ENCODE measurements at regions of chr20 and their contacts with region 1.

Region 1: GRCh38 chr20:33299111-33299603 is 16.1 kb downstream of the BPIFB1 start:
- DNase-seq: peak in 1 of 2 donors; percentile 64
- H3K4me3 ChIP-seq: no peak overlapping the region
- H3K27ac ChIP-seq: no peak overlapping the region
- H3K4me1 ChIP-seq: no peaks in the 10 kb centered on the region
- H3K27me3 ChIP-seq: no peaks in the 10 kb centered on the region
- CTCF ChIP-seq: peak; percentile 42 to 78 (median 72)

Region 2: GRCh38 chr20:32902456-32903420 is 396.4 kb before region 1 on chr20:
- intact Hi-C with region 1: loop called (anchors 10 kb)
- DNase-seq: no peak
- H3K4me3 ChIP-seq: no peak overlapping the region
- H3K27ac ChIP-seq: no peak overlapping the region
- H3K4me1 ChIP-seq: no peaks in the 10 kb centered on the region
- H3K27me3 ChIP-seq: no peaks in the 10 kb centered on the region
- CTCF ChIP-seq: peak; percentile 39 to 68 (median 50)

Region 3: DNA sequence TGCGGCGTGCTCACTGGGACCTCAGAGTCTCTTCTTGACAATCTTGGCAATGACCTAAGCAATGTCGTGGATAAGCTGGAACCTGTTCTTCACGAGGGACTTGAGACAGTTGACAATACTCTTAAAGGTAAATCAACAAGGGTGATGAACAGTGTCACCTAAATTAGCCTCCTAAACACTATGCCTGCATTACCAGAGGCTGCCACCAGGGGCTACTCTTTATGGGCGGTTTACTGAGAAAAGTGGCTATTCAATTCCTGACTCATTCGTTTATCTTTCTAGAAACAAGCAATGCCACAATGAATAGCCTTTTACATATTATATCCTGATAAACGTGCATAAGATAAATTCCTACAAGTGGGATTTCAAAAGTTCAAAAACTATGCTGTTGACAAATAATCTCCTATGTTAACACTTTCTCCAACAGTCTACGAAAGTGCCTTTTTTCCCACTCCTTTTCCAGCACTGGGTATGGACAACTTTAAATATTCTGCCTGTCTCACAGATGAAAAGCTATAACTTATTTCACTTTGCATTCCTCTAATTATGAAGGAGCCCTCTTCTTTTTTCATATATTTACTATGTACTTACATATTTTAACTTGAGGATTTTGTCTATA is 129.9 kb before region 1 on chr20:
- intact Hi-C with region 1: no loop called
- DNase-seq: no peak
- H3K4me3 ChIP-seq: no peak overlapping the region
- H3K27ac ChIP-seq: no peak overlapping the region
- H3K4me1 ChIP-seq: no peaks in the 10 kb centered on the region
- H3K27me3 ChIP-seq: no peaks in the 10 kb centered on the region
- CTCF ChIP-seq: peak in 1 of 3 experiments; percentile 20

Region 4: GRCh38 chr20:33322456-33322855 is 23.3 kb after region 1 on chr20:
- intact Hi-C with region 1: no loop called
- DNase-seq: no peak
- H3K4me3 ChIP-seq: no peak overlapping the region
- H3K27ac ChIP-seq: no peak overlapping the region
- H3K4me1 ChIP-seq: no peaks in the 10 kb centered on the region
- H3K27me3 ChIP-seq: no peaks in the 10 kb centered on the region
- CTCF ChIP-seq: no peak

Measured in ascending aorta (tissue), 2 donors.